ENCODE measurements at regions of chr1 and their contacts with region 1.

Region 1: GRCh38 chr1:183471743-183472487 is 384 bp upstream of the SMG7 start:
- DNase-seq: peak; percentile 96 to 99 (median 97)
- H3K4me3 ChIP-seq: peak overlapping the region; percentile 82 to 98
- H3K4me3 Mint-ChIP-seq: peak overlapping the region; percentile 90 to 99 (median 96)
- H3K27ac ChIP-seq: peak overlapping the region; percentile 91
- H3K27ac Mint-ChIP-seq: peak overlapping the region; percentile 99 to 100 (median 100)
- H3K4me1 ChIP-seq: peaks cover 39% of the 10 kb centered on the region
- H3K4me1 Mint-ChIP-seq: peaks cover 13 to 43% (median 19%) of the 10 kb centered on the region in 4 donors
- H3K27me3 ChIP-seq: no peaks in the 10 kb centered on the region
- H3K27me3 Mint-ChIP-seq: peaks cover 0 to 3% of the 10 kb centered on the region in 2 donors

Region 2: DNA sequence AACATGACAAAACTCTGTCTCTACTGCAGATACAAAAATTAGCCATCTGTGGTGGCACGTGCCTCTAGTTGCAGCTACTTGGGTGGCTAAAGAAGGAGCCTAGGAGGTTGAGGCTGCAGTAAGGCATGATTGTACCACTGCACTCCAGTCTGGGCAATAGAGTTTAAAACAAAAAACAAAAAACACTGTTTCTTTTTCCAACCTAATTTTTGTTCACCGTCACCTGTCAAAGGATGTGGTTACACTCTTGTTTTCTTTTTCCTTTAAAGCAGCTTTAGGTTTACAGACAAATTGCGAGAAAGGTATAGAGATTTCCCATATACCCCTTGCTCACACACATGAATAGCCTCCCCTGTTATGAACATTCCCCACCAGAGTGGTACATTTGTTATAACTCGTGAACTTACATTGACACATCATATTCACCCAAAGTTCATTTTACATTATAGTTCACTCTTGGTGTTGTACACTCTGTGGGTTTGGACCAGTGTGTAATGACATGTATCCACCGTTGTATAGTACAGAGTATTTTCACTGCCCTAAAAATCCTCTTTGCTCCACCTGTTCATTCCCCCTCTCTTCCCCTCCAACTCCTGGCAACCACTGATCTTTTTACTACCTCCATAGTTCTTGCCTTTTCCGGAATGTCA is 26.6 kb after region 1 on chr1:
- CTCF ChIA-PET with region 1: no interaction called
- POLR2A ChIA-PET with region 1: interaction called, 6 read pairs
- intact Hi-C with region 1: loop called (anchors 2 kb)
- DNase-seq: peak in 4 of 5 donors; percentile 14 to 27 (median 18)
- H3K4me3 ChIP-seq: no peak overlapping the region
- H3K4me3 Mint-ChIP-seq: peak overlapping the region; percentile 7 to 80 (median 61)
- H3K27ac ChIP-seq: no peak overlapping the region
- H3K27ac Mint-ChIP-seq: peak overlapping the region; percentile 1 to 85 (median 63)
- H3K4me1 ChIP-seq: peaks cover 59% of the 10 kb centered on the region
- H3K4me1 Mint-ChIP-seq: peaks cover 49 to 72% (median 60%) of the 10 kb centered on the region in 4 donors
- H3K27me3 ChIP-seq: no peaks in the 10 kb centered on the region
- H3K27me3 Mint-ChIP-seq: no peaks in the 10 kb centered on the region

Region 3: GRCh38 chr1:183622884-183623785 is 151.2 kb after region 1 on chr1:
- CTCF ChIA-PET with region 1: interaction called, 15 read pairs
- POLR2A ChIA-PET with region 1: no interaction called
- intact Hi-C with region 1: loop called (anchors 1 kb)
- DNase-seq: peak; percentile 42 to 60 (median 50)
- H3K4me3 ChIP-seq: no peak overlapping the region
- H3K4me3 Mint-ChIP-seq: no peak overlapping the region
- H3K27ac ChIP-seq: no peak overlapping the region
- H3K27ac Mint-ChIP-seq: peak overlapping the region; percentile 25 to 67 (median 49)
- H3K4me1 ChIP-seq: peaks cover 11% of the 10 kb centered on the region
- H3K4me1 Mint-ChIP-seq: peaks cover under 1 to 10% (median 7%) of the 10 kb centered on the region in 4 donors
- H3K27me3 ChIP-seq: no peaks in the 10 kb centered on the region
- H3K27me3 Mint-ChIP-seq: no peaks in the 10 kb centered on the region

Region 4: GRCh38 chr1:183685112-183685713 is 213.3 kb after region 1 on chr1:
- CTCF ChIA-PET with region 1: interaction called, 14 read pairs
- POLR2A ChIA-PET with region 1: no interaction called
- intact Hi-C with region 1: loop called (anchors 1 kb)
- DNase-seq: peak in 4 of 5 donors; percentile 51 to 57 (median 56)
- H3K4me3 ChIP-seq: no peak overlapping the region
- H3K4me3 Mint-ChIP-seq: no peak overlapping the region
- H3K27ac ChIP-seq: no peak overlapping the region
- H3K27ac Mint-ChIP-seq: no peak overlapping the region
- H3K4me1 ChIP-seq: no peaks in the 10 kb centered on the region
- H3K4me1 Mint-ChIP-seq: no peaks in the 10 kb centered on the region
- H3K27me3 ChIP-seq: no peaks in the 10 kb centered on the region
- H3K27me3 Mint-ChIP-seq: peaks cover 4 to 12% of the 10 kb centered on the region in 2 donors

Region 5: GRCh38 chr1:184051485-184052193 is 579.7 kb after region 1 on chr1 and contains the start of gene TSEN15:
- CTCF ChIA-PET with region 1: no interaction called
- POLR2A ChIA-PET with region 1: interaction called, 4 read pairs
- intact Hi-C with region 1: loop called (anchors 2 kb)
- DNase-seq: peak; percentile 66 to 74 (median 72)
- H3K4me3 ChIP-seq: peak within 1 kb of the TSS; percentile 88 to 95
- H3K4me3 Mint-ChIP-seq: peak within 1 kb of the TSS; percentile 98 to 99 (median 99)
- H3K27ac ChIP-seq: peak within 1 kb of the TSS; percentile 67
- H3K27ac Mint-ChIP-seq: peak within 1 kb of the TSS; percentile 89 to 98 (median 96)
- H3K4me1 ChIP-seq: peaks cover 33% of the 10 kb centered on the region
- H3K4me1 Mint-ChIP-seq: peaks cover 26 to 47% (median 37%) of the 10 kb centered on the region in 4 donors
- H3K27me3 ChIP-seq: no peaks in the 10 kb centered on the region
- H3K27me3 Mint-ChIP-seq: peaks cover 0 to 5% of the 10 kb centered on the region in 2 donors
- total RNA-seq, gene TSEN15: 34.0 to 42.2 TPM